ENCODE measurements at regions of chr1 and their contacts with region 1.

Region 1: GRCh38 chr1:198638894-198639635 is at the start of gene PTPRC:
- DNase-seq: no peak
- ATAC-seq: peak; percentile 67
- H3K4me3 Mint-ChIP-seq: peak within 1 kb of the TSS; percentile 98
- H3K27ac Mint-ChIP-seq: peak within 1 kb of the TSS; percentile 94
- H3K4me1 Mint-ChIP-seq: peaks cover 48% of the 10 kb centered on the region
- H3K27me3 Mint-ChIP-seq: no peaks in the 10 kb centered on the region
- total RNA-seq, gene PTPRC: 828 to 854 TPM

Region 2: GRCh38 chr1:198523182-198523950 is 115.7 kb before region 1 on chr1:
- POLR2A ChIA-PET with region 1: interaction called, 17 read pairs
- DNase-seq: no peak
- ATAC-seq: peak; percentile 71
- H3K4me3 Mint-ChIP-seq: peak overlapping the region; percentile 79
- H3K27ac Mint-ChIP-seq: peak overlapping the region; percentile 89
- H3K4me1 Mint-ChIP-seq: peaks cover 62% of the 10 kb centered on the region
- H3K27me3 Mint-ChIP-seq: no peaks in the 10 kb centered on the region

Region 3: DNA sequence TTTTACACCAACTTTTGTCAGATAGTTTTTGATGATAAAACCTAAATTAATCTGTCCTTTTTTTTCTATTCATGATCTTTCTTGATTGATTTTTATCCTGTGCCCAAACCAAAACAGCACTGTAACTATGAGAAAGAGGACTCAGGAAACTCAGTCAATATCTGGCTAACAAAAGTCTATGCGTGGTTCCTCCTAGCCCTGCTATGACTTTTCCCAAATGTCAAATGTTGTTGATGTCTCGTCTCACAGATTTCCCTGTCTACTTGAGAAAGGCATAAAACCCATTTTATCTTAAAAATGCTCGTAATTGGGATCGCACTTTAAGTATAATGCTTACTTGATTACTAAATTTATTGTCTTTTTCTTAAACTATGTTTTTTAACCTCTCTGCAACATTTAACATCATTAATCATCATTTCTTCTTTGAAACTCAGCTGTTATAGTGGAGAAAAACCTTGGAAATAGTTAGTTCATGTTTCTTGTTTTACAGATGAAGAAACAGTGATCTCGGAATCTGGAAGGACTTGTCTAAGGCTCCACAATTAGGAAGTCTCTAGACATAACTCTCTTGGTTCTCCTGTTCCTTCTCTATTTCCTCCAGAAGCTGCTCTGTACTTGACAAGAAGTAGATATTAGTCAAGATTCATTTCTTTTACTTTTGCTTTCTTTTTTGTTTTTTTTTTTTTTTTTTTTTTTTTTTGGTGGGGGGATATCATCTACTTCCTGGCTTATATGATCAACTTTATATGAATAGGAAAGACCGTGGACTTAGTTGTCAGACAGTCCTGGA is 26.4 kb before region 1 on chr1:
- POLR2A ChIA-PET with region 1: interaction called, 20 read pairs
- DNase-seq: no peak
- ATAC-seq: peak; percentile 44
- H3K4me3 Mint-ChIP-seq: peak overlapping the region; percentile 82
- H3K27ac Mint-ChIP-seq: peak overlapping the region; percentile 91
- H3K4me1 Mint-ChIP-seq: peaks cover 55% of the 10 kb centered on the region
- H3K27me3 Mint-ChIP-seq: no peaks in the 10 kb centered on the region

Region 4: GRCh38 chr1:198620951-198621824 is 17.9 kb before region 1 on chr1:
- POLR2A ChIA-PET with region 1: interaction called, 145 read pairs
- DNase-seq: peak; percentile 77
- ATAC-seq: peak; percentile 75
- H3K4me3 Mint-ChIP-seq: peak overlapping the region; percentile 88
- H3K27ac Mint-ChIP-seq: peak overlapping the region; percentile 97
- H3K4me1 Mint-ChIP-seq: peaks cover 67% of the 10 kb centered on the region
- H3K27me3 Mint-ChIP-seq: no peaks in the 10 kb centered on the region

Region 5: GRCh38 chr1:198651650-198652400 is 12.8 kb after region 1 on chr1:
- POLR2A ChIA-PET with region 1: interaction called, 22 read pairs
- DNase-seq: no peak
- ATAC-seq: peak; percentile 22
- H3K4me3 Mint-ChIP-seq: peak overlapping the region; percentile 84
- H3K27ac Mint-ChIP-seq: peak overlapping the region; percentile 87
- H3K4me1 Mint-ChIP-seq: peaks cover 65% of the 10 kb centered on the region
- H3K27me3 Mint-ChIP-seq: no peaks in the 10 kb centered on the region

Region 6: GRCh38 chr1:198657550-198658064 is 18.5 kb after region 1 on chr1:
- POLR2A ChIA-PET with region 1: interaction called, 19 read pairs
- DNase-seq: no peak
- ATAC-seq: peak; percentile 34
- H3K4me3 Mint-ChIP-seq: peak overlapping the region; percentile 83
- H3K27ac Mint-ChIP-seq: peak overlapping the region; percentile 88
- H3K4me1 Mint-ChIP-seq: peaks cover 56% of the 10 kb centered on the region
- H3K27me3 Mint-ChIP-seq: no peaks in the 10 kb centered on the region

Measured in activated naive CD8-positive, alpha-beta T cell treated with anti-CD3 and anti-CD28 coated beads, Interleukin-2, amount 10 ng/mL, durations not matched to agents 7 days and 5 days (primary cell).